ENCODE measurements at regions of chr6 and their contacts with region 1.

Region 1: GRCh38 chr6:35973670-35974222 is 50.7 kb downstream of the SLC26A8 start:
- DNase-seq: peak; percentile 24
- H3K4me3 Mint-ChIP-seq: no peak overlapping the region
- H3K27ac Mint-ChIP-seq: peak overlapping the region; percentile 0
- H3K4me1 Mint-ChIP-seq: peaks cover 6% of the 10 kb centered on the region
- H3K27me3 Mint-ChIP-seq: no peaks in the 10 kb centered on the region

Region 2: DNA sequence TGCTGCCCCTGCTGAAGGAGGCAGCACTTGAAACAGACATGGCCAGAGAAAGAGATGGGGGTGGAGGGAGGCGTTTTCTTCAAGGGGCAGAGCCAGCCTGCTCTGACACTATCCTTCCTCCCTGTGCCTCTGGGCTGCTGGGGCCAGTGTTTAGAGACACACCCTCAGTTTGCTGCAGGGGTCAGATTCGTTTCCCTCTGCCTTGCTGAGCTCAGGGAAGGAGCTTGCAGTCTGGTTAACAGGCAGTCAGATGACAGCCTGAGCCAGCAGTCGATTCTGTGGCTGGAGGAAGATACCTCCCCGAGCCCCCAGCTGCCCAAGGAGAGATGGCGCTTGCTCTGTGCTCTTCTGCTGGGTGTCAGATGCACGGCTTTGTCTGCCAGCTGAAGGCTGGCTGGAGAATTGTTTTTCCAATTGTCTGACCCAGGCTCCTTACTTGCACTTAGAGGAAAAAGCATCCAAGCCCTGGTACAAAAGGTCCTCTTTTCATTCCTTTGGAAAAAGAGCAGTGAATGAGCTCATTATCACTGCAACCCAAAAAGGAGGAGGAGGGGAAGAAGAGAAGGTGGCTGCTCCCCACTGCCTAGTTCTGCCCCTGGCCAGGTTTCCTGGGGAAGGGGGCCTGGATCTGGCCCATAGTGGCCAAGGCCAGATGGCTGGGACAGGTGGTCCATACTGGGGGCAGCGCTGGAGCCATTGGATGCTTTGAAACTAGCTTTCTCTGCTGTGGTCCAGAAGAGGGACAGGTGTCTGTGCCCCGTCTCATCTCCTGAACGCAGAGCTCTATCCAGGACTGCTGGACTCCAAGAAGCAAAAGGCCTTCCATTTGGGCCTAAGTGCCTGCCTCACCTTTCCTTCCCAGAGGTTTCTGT is 920.8 kb before region 1 on chr6:
- intact Hi-C with region 1: no loop called
- DNase-seq: no peak
- H3K4me3 Mint-ChIP-seq: no peak overlapping the region
- H3K27ac Mint-ChIP-seq: no peak overlapping the region
- H3K4me1 Mint-ChIP-seq: peaks cover 2% of the 10 kb centered on the region
- H3K27me3 Mint-ChIP-seq: no peaks in the 10 kb centered on the region

Region 3: DNA sequence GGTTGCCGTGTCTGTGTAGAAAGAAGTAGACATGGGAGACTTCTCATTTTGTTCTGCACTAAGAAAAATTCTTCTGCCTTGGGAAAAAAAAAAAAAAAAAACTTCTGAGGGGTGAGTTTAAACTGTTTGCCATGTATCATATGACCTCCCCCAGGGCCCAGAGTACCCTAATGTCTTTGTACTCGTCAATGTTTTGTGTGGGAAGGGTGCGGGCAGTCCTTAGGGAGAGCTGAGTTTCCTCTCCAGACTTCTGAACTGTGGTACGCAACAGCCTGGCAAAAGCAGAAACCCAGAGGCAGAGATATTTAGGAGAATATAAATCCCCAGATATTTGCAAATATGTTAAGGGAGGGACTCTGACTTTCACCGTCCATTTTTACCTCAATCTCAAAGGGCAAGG is 632.8 kb before region 1 on chr6:
- intact Hi-C with region 1: no loop called
- DNase-seq: no peak
- H3K4me3 Mint-ChIP-seq: no peak overlapping the region
- H3K27ac Mint-ChIP-seq: no peak overlapping the region
- H3K4me1 Mint-ChIP-seq: peaks cover 44% of the 10 kb centered on the region
- H3K27me3 Mint-ChIP-seq: no peaks in the 10 kb centered on the region

Region 4: GRCh38 chr6:35920793-35921732 is 52.7 kb before region 1 on chr6 and contains the start of gene SRPK1:
- intact Hi-C with region 1: loop called (anchors 1 kb)
- DNase-seq: peak; percentile 87
- H3K4me3 Mint-ChIP-seq: peak within 1 kb of the TSS; percentile 94
- H3K27ac Mint-ChIP-seq: peak within 1 kb of the TSS; percentile 96
- H3K4me1 Mint-ChIP-seq: peaks cover 35% of the 10 kb centered on the region
- H3K27me3 Mint-ChIP-seq: no peaks in the 10 kb centered on the region
- total RNA-seq, gene SRPK1: 146 and 149 TPM in 2 replicates